OCI-LY7 (cell line): ENCODE measurements at regions of chr14 and their contacts with region 1.

Region 1: DNA sequence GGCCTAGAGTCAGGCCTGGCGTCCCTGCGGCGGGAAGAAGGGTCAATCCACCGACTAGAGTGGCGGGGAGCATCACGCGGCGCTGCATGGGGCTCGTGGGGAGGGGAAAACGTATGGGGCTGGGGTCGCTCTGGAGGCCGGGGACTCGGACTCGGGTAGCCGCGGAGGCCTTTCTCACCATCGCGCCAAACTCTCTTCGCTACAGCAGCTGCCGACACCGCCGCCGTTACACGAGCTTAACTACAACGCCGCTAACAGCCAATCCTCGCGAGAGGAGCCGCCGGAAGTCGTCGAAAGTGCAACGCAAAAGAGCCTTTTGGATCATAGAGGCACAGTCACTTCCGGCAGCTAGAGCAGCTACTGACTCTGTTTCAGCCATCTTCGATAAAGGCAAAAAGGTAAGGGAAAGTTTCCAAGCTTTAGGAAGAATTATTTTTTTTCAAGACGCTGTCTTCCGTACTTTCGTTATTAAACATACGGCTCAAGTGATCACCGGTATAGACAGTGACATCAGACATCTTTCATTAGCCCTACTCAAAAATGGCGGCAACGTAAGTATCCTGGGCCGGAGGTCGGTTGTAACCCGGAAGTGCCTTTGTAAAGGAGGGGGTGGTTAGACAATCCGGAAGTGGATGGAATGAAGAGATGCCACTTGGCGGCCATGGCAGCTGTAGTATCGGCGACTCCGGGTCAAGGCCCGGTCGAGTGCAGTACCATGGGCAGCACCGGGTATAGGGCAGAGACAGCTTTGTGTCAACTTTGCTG is at the starts of genes ERH and SLC39A9:
- DNase-seq: peak; percentile 99
- H3K4me3 ChIP-seq: peak within 1 kb of the TSS; percentile 82
- H3K27ac ChIP-seq: peak within 1 kb of the TSS; percentile 75
- H3K4me1 ChIP-seq: peaks cover 57% of the 10 kb centered on the region
- CTCF ChIP-seq: no peak
- total RNA-seq, gene ERH: 204 and 435 TPM in 2 replicates
- total RNA-seq, gene SLC39A9: 70.4 and 86.5 TPM in 2 replicates

Region 2: GRCh38 chr14:69153131-69153872 is 244.9 kb before region 1 on chr14:
- CTCF ChIA-PET with region 1: no interaction called
- POLR2A ChIA-PET with region 1: no interaction called
- intact Hi-C with region 1: loop called (anchors 1 kb)
- DNase-seq: peak; percentile 95
- H3K4me3 ChIP-seq: peak overlapping the region; percentile 84
- H3K27ac ChIP-seq: peak overlapping the region; percentile 80
- H3K4me1 ChIP-seq: peaks cover 25% of the 10 kb centered on the region
- CTCF ChIP-seq: no peak

Region 3: DNA sequence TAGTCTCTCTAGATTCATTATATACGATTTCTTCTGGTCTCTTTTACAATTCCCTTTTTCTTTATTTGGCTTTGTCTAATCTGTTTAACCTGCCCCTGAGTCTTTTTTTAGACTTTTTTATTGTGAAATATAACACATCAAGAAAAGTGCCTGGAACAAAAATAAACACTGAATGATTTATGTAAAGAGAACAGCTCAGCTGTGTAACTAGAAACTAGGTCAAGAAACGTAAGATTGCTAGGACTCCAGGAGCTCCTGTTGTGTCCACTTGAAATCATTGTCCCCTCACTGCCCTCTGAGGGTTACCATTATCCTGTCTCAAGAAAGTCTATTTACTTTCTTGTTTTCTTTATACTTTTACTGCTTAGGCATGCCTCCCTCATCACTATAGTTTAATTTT is 183.8 kb before region 1 on chr14:
- CTCF ChIA-PET with region 1: no interaction called
- POLR2A ChIA-PET with region 1: no interaction called
- intact Hi-C with region 1: no loop called
- DNase-seq: no peak
- H3K4me3 ChIP-seq: no peak overlapping the region
- H3K27ac ChIP-seq: no peak overlapping the region
- H3K4me1 ChIP-seq: no peaks in the 10 kb centered on the region
- CTCF ChIP-seq: no peak

Region 4: GRCh38 chr14:69354383-69355153 is 43.7 kb before region 1 on chr14:
- CTCF ChIA-PET with region 1: no interaction called
- POLR2A ChIA-PET with region 1: interaction called, 5 read pairs
- intact Hi-C with region 1: loop called (anchors 2 kb)
- DNase-seq: peak; percentile 86
- H3K4me3 ChIP-seq: peak overlapping the region; percentile 46
- H3K27ac ChIP-seq: peak overlapping the region; percentile 63
- H3K4me1 ChIP-seq: peaks cover 34% of the 10 kb centered on the region
- CTCF ChIP-seq: no peak

Region 5: GRCh38 chr14:69413483-69413882 is 15.2 kb after region 1 on chr14:
- CTCF ChIA-PET with region 1: no interaction called
- POLR2A ChIA-PET with region 1: interaction called, 4 read pairs
- intact Hi-C with region 1: loop called (anchors 1 kb)
- DNase-seq: no peak
- H3K4me3 ChIP-seq: no peak overlapping the region
- H3K27ac ChIP-seq: no peak overlapping the region
- H3K4me1 ChIP-seq: no peaks in the 10 kb centered on the region
- CTCF ChIP-seq: no peak

Region 6: GRCh38 chr14:69441948-69442347 is 43.7 kb after region 1 on chr14:
- CTCF ChIA-PET with region 1: no interaction called
- POLR2A ChIA-PET with region 1: interaction called, 28 read pairs
- intact Hi-C with region 1: loop called (anchors 1 kb)
- DNase-seq: peak; percentile 88
- H3K4me3 ChIP-seq: peak overlapping the region; percentile 24
- H3K27ac ChIP-seq: peak overlapping the region; percentile 85
- H3K4me1 ChIP-seq: peaks cover 28% of the 10 kb centered on the region
- CTCF ChIP-seq: no peak

Region 7: DNA sequence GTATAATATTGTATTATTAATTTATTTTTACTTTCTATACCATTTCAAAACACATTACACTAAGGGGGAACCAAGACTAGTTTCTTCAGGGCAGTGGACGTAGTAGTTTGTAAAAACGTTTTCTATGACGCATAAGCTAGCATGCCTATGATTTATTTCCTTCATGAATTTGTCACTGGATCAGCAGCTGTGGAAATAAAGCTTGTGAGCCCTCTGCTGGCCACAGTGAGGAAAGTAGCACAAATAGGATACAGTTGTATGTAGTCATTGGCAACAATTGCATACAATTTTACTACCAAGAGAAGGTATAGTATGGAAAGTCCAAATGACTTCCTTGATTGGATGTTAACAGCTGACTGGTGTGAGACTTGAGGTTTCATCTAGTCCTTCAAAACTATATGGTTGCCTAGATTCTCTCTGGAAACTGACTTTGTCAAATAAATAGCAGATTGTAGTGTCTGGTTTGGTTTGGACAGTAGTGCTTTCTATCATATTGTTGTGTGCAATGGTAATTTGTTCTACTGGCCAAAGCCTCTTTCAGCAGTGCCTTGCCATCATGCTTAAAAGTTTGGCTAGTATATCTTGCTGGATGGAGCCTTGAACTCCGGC is 62.0 kb after region 1 on chr14:
- CTCF ChIA-PET with region 1: no interaction called
- POLR2A ChIA-PET with region 1: interaction called, 10 read pairs
- intact Hi-C with region 1: loop called (anchors 1 kb)
- DNase-seq: peak; percentile 79
- H3K4me3 ChIP-seq: no peak overlapping the region
- H3K27ac ChIP-seq: no peak overlapping the region
- H3K4me1 ChIP-seq: no peaks in the 10 kb centered on the region
- CTCF ChIP-seq: peak; percentile 95

Region 8: DNA sequence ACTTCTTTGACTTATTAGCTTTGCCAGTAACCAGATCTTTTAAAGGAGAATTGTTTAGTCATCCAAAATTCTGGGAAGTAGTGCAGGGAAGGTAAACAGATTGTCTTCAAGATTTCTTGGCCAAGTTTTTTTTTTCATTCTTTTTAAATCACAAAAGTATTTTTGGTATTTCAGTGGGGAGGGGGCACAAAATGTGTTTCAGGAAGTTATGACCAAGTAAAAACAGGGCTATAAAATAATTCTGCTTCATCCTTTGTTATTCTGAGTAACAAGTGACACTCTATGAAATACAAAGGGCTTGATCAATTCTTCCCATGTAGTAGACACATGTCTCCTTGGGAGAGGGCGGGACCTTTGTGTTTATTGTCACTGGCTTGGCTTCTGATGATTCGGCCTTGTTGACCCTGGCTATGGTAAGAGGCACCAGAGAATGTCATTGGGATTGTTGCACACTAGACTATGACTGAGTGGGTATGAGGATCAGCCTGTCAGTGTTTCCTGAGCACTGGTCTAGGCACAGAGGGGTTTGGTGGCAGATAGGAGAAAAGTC is 268.5 kb after region 1 on chr14:
- CTCF ChIA-PET with region 1: no interaction called
- POLR2A ChIA-PET with region 1: no interaction called
- intact Hi-C with region 1: no loop called
- DNase-seq: no peak
- H3K4me3 ChIP-seq: peak overlapping the region; percentile 58
- H3K27ac ChIP-seq: peak overlapping the region; percentile 80
- H3K4me1 ChIP-seq: peaks cover 96% of the 10 kb centered on the region
- CTCF ChIP-seq: no peak